ENCODE measurements at regions of chr3 and their contacts with region 1.

Region 1: DNA sequence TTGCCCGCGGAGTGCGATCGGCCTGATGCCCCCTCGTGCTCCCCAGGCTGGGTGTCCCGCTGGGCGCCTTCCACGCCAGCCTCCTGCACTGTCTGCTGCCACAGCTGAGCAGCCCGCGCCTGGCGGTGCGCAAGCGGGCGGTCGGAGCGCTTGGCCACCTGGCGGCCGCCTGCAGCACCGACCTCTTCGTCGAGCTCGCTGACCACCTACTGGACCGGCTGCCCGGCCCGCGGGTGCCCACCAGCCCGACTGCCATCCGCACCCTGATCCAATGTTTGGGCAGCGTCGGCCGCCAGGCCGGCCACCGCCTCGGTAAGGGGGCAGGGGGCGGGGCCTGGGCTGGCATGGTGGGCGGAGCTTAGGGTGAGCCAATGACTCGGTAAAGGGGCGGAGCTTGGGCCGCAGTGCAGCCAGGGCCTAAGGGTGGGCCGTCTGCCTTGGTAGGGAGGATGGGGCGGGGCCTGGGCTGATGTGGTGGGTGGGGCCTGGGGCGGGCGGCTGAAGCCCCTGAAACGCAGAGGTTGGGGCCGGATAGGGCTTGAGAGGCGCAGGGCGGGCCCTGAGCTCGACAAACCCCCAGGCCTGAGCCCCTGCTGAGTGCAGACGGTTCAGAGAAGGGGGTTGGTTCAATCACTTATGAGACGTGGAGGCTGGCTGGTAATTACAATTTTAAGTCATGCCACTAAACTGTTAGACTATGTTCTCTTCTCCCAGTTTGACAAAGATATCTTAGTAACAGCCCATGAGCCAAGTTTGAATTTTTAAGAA is 13.7 kb downstream of the CAND2 start:
- DNase-seq: peak; percentile 90 to 91
- ATAC-seq: peak; percentile 89 to 97
- H3K4me3 ChIP-seq: peak overlapping the region; percentile 52
- H3K27ac ChIP-seq: peak overlapping the region; percentile 63 to 83
- H3K4me1 ChIP-seq: peaks cover 11% of the 10 kb centered on the region
- CTCF ChIP-seq: peak; percentile 42
- EP300 ChIP-seq: no peak
- POLR2A ChIP-seq: peak; percentile 85
- RAD21 ChIP-seq: peak; percentile 34 to 49; a peak in 3 of 5 replicates

Region 2: GRCh38 chr3:12508291-12508700 is 301.9 kb before region 1 on chr3:
- CTCF ChIA-PET with region 1: no interaction called
- POLR2A ChIA-PET with region 1: no interaction called
- DNase-seq: peak; percentile 16 to 19
- ATAC-seq: peak; percentile 72 to 84
- H3K4me3 ChIP-seq: no peak overlapping the region
- H3K27ac ChIP-seq: peak overlapping the region; percentile 32 to 46; a peak in 1 of 6 replicates
- H3K4me1 ChIP-seq: peaks cover 17% of the 10 kb centered on the region
- CTCF ChIP-seq: no peak
- EP300 ChIP-seq: no peak
- POLR2A ChIP-seq: no peak
- RAD21 ChIP-seq: no peak

Region 3: GRCh38 chr3:12695112-12695511 is 115.1 kb before region 1 on chr3:
- CTCF ChIA-PET with region 1: no interaction called
- POLR2A ChIA-PET with region 1: no interaction called
- DNase-seq: no peak
- ATAC-seq: no peak
- H3K4me3 ChIP-seq: no peak overlapping the region
- H3K27ac ChIP-seq: 0 out of 6 replicates have a peak overlapping the region, but pooled peaks of 1 of the 2 experiments have one; percentile 27
- H3K4me1 ChIP-seq: peaks cover 17% of the 10 kb centered on the region; the same call in 2 of the 3 replicates
- CTCF ChIP-seq: no peak
- EP300 ChIP-seq: no peak
- POLR2A ChIP-seq: no peak
- RAD21 ChIP-seq: no peak

Region 4: GRCh38 chr3:12782172-12782815 is 27.9 kb before region 1 on chr3:
- CTCF ChIA-PET with region 1: interaction called, 36 read pairs
- POLR2A ChIA-PET with region 1: no interaction called
- DNase-seq: peak in 1 of 2 experiments; percentile 65
- ATAC-seq: peak; percentile 30 to 55; a peak in 2 of 6 replicates
- H3K4me3 ChIP-seq: no peak overlapping the region
- H3K27ac ChIP-seq: no peak overlapping the region
- H3K4me1 ChIP-seq: no peaks in the 10 kb centered on the region
- CTCF ChIP-seq: no peak
- EP300 ChIP-seq: no peak
- POLR2A ChIP-seq: no peak
- RAD21 ChIP-seq: no peak

Region 5: GRCh38 chr3:12796171-12797123 is 13.8 kb before region 1 on chr3 and contains the start of gene CAND2:
- CTCF ChIA-PET with region 1: interaction called, 22 read pairs
- POLR2A ChIA-PET with region 1: interaction called, 6 read pairs
- DNase-seq: peak in 1 of 2 experiments; percentile 37
- ATAC-seq: peak; percentile 51 to 88; a peak in 5 of 6 replicates
- H3K4me3 ChIP-seq: peak within 1 kb of the TSS; percentile 55
- H3K27ac ChIP-seq: peak within 1 kb of the TSS; percentile 65 to 88
- H3K4me1 ChIP-seq: peaks cover 5% of the 10 kb centered on the region; the same call in 1 of the 3 replicates
- CTCF ChIP-seq: no peak
- EP300 ChIP-seq: no peak
- POLR2A ChIP-seq: no peak
- RAD21 ChIP-seq: no peak
- polyA plus RNA-seq, gene CAND2: 0.72 and 0.91 TPM in 2 replicates

Region 6: DNA sequence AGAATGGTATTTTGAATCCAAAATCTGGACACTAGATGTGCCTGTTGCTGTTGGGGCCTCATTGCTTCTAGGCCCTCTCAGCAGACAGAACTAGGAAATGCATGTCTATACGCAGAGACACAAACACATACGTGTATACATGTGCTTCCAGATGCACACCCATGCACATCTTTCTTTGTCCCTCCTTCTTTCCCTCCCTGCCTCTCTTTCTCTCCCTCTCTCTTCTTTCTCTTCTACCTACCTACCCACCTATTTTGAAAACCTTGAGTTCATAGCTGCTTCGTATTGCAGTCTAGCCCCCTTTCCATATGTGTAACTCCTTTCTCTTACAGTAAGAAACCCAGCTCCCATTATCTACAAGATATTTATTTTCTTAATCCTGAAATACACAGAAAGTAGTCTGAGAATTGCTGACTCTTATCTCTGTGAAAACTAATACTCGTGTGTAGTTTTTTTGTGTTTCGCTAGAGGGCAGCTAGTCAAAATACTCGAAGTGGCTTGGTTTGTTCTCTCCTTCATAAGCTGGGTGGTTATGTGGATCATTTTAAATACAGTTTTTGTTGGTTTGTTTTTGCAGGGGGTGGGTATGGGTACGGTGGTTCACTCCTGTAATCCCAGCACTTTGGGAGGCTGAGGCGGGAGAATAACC is 12.7 kb after region 1 on chr3:
- CTCF ChIA-PET with region 1: interaction called, 113 read pairs
- POLR2A ChIA-PET with region 1: interaction called, 3 read pairs
- DNase-seq: peak; percentile 53 to 54
- ATAC-seq: peak in 1 of 2 experiments; percentile 80; a peak in 4 of 6 replicates
- H3K4me3 ChIP-seq: no peak overlapping the region
- H3K27ac ChIP-seq: no peak overlapping the region
- H3K4me1 ChIP-seq: no peaks in the 10 kb centered on the region
- CTCF ChIP-seq: peak; percentile 56
- EP300 ChIP-seq: no peak
- POLR2A ChIP-seq: no peak
- RAD21 ChIP-seq: peak in 1 of 2 experiments; percentile 32; a peak in 1 of 5 replicates

Region 7: GRCh38 chr3:12830785-12831156 is 20.6 kb after region 1 on chr3:
- CTCF ChIA-PET with region 1: interaction called, 113 read pairs
- POLR2A ChIA-PET with region 1: interaction called, 10 read pairs
- DNase-seq: no peak
- ATAC-seq: peak; percentile 23 to 39; a peak in 5 of 6 replicates
- H3K4me3 ChIP-seq: no peak overlapping the region
- H3K27ac ChIP-seq: no peak overlapping the region; a peak in 1 of 6 replicates
- H3K4me1 ChIP-seq: peaks cover 24% of the 10 kb centered on the region
- CTCF ChIP-seq: no peak
- EP300 ChIP-seq: no peak
- POLR2A ChIP-seq: no peak
- RAD21 ChIP-seq: no peak

Region 8: GRCh38 chr3:13025094-13025493 is 214.9 kb after region 1 on chr3:
- CTCF ChIA-PET with region 1: no interaction called
- POLR2A ChIA-PET with region 1: no interaction called
- DNase-seq: peak; percentile 40 to 50
- ATAC-seq: peak; percentile 73 to 74
- H3K4me3 ChIP-seq: no peak overlapping the region
- H3K27ac ChIP-seq: peak overlapping the region; percentile 24 to 53; a peak in 2 of 6 replicates
- H3K4me1 ChIP-seq: peaks cover 35% of the 10 kb centered on the region
- CTCF ChIP-seq: no peak
- EP300 ChIP-seq: no peak
- POLR2A ChIP-seq: no peak
- RAD21 ChIP-seq: no peak

Measured in A549 (cell line).